ENCODE measurements at regions of chr21 and their contacts with region 1.

Region 1: DNA sequence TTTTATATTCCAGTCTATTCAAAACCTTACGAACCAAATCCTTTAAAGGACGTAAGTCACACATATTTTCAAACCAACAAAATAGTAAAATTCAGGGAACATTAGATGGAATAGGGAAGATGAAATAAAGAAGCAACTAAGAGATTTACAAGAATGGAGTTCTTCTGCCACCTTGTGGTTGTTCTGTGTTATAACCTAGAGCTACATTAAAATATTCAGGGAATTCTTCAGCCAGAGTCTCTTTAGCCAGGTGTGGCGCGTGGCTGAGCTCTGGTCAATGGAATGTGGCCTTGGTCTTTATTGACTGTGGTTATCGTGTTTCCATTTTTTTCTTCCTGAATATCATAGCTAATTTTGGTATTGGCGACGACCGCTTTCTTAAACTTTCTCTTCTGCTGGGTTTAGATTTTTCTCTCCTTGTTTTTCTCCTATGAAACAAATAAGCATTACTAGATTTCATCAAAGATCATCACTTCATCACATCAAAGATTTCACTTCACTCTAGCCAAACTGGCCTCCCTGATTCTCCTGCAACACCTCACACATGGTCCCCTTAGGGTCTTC is 221.3 kb downstream of the MRPL39 start:
- DNase-seq: no peak
- H3K4me3 ChIP-seq: no peak overlapping the region
- H3K27ac ChIP-seq: no peak overlapping the region
- H3K4me1 ChIP-seq: peaks cover 0 to 3% (median 0%) of the 10 kb centered on the region in 4 experiments; a peak in 2 of 7 replicates
- H3K27me3 ChIP-seq: no peaks in the 10 kb centered on the region
- CTCF ChIP-seq: peak in 2 of 3 experiments; percentile 58 to 59; a peak in 2 of 4 replicates
- EP300 ChIP-seq: no peak
- POLR2A ChIP-seq: no peak
- RAD21 ChIP-seq: peak; percentile 81 to 87

Region 2: DNA sequence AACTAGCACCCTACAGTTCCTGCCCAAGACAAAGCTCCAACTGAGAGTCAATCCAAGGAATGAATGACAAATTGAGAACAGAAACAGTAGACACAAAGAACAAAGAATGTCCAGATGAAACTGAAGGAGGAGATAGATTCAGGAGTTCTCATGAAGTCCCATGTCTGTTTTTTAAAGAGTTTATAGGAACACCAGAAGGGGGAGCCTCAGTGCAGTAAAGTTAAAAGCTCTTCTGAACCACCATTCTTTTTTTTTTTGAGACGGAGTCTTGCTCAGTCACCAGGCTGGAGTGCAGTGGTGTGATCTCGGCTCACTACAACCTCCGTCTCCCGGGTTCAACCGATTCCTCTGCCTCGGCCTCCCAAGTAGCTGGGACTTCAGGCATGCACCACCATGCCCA is 102.3 kb before region 1 on chr21:
- CTCF ChIA-PET with region 1: interaction called, 23 read pairs
- POLR2A ChIA-PET with region 1: no interaction called
- DNase-seq: no peak
- H3K4me3 ChIP-seq: no peak overlapping the region
- H3K27ac ChIP-seq: no peak overlapping the region
- H3K4me1 ChIP-seq: peaks cover 0 to 3% (median 0%) of the 10 kb centered on the region in 4 experiments; a peak in 1 of 7 replicates
- H3K27me3 ChIP-seq: no peaks in the 10 kb centered on the region
- CTCF ChIP-seq: peak in 2 of 3 experiments; percentile 20 to 40; a peak in 2 of 4 replicates
- EP300 ChIP-seq: no peak
- POLR2A ChIP-seq: no peak
- RAD21 ChIP-seq: peak; percentile 55 to 58; a peak in 3 of 4 replicates

Region 3: DNA sequence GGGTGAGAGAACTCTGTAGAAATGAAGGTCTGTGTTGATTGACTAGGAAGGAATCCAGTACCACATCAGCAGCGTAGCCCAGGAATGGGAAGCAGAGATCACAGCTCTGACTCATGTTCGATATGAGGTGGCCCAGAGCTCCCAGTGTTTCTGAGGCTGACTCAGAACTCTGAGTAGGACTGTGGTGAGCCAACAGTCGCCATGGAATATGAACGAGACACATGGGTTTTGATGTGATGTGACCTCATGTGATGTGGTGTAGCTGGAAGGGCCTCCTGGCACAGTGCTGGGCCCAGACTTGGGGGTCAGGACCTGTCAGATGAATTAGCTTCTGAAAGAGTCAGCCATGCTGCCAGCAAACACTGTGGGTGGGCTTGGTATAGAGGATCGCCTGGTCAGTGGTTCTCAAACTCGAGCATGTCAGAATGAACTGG is 15.7 kb before region 1 on chr21:
- CTCF ChIA-PET with region 1: interaction called, 15 read pairs
- POLR2A ChIA-PET with region 1: no interaction called
- DNase-seq: no peak
- H3K4me3 ChIP-seq: no peak overlapping the region
- H3K27ac ChIP-seq: no peak overlapping the region; the same call in 1 of the 2 replicates
- H3K4me1 ChIP-seq: peaks cover 5 to 12% (median 9%) of the 10 kb centered on the region in 4 experiments; a peak in 4 of 7 replicates
- H3K27me3 ChIP-seq: no peaks in the 10 kb centered on the region
- CTCF ChIP-seq: no peak
- EP300 ChIP-seq: no peak
- POLR2A ChIP-seq: no peak
- RAD21 ChIP-seq: no peak

Measured in H1 (cell line).